Prostate gland (tissue), 2 donors: ENCODE measurements at regions of chr4 and their contacts with region 1.

Region 1: GRCh38 chr4:119939071-119939995 is 127.3 kb downstream of the MAD2L1 start:
- DNase-seq: no peak
- H3K4me3 ChIP-seq: no peak overlapping the region
- H3K27ac ChIP-seq: peak overlapping the region in 1 of 2 donors; percentile 35
- H3K4me1 ChIP-seq: no peaks in the 10 kb centered on the region
- H3K27me3 ChIP-seq: no peaks in the 10 kb centered on the region
- CTCF ChIP-seq: no peak
- POLR2A ChIP-seq: no peak

Region 2: GRCh38 chr4:119865389-119865788 is 73.9 kb before region 1 on chr4:
- intact Hi-C with region 1: no loop called
- DNase-seq: no peak
- H3K4me3 ChIP-seq: no peak overlapping the region
- H3K27ac ChIP-seq: no peak overlapping the region
- H3K4me1 ChIP-seq: no peaks in the 10 kb centered on the region
- H3K27me3 ChIP-seq: no peaks in the 10 kb centered on the region
- CTCF ChIP-seq: no peak
- POLR2A ChIP-seq: no peak

Region 3: GRCh38 chr4:119897260-119897659 is 42.1 kb before region 1 on chr4:
- intact Hi-C with region 1: loop called (anchors 5 kb)
- DNase-seq: no peak
- H3K4me3 ChIP-seq: no peak overlapping the region
- H3K27ac ChIP-seq: no peak overlapping the region
- H3K4me1 ChIP-seq: no peaks in the 10 kb centered on the region
- H3K27me3 ChIP-seq: no peaks in the 10 kb centered on the region
- CTCF ChIP-seq: no peak
- POLR2A ChIP-seq: no peak

Region 4: GRCh38 chr4:120000591-120001296 is 61.4 kb after region 1 on chr4:
- intact Hi-C with region 1: no loop called
- DNase-seq: no peak
- H3K4me3 ChIP-seq: no peak overlapping the region
- H3K27ac ChIP-seq: no peak overlapping the region
- H3K4me1 ChIP-seq: no peaks in the 10 kb centered on the region
- H3K27me3 ChIP-seq: no peaks in the 10 kb centered on the region
- CTCF ChIP-seq: no peak
- POLR2A ChIP-seq: no peak